Breast epithelium (tissue), 4 donors: ENCODE measurements at regions of chr9 and their contacts with region 1.

Region 1: GRCh38 chr9:91422758-91423711 is 597 bp downstream of the NFIL3 start:
- DNase-seq: peak in 1 of 2 donors; percentile 77
- H3K4me3 ChIP-seq: peak overlapping the region; percentile 59 to 88 (median 81)
- H3K27ac ChIP-seq: peak overlapping the region; percentile 93 to 100
- H3K4me1 ChIP-seq: peaks cover 0 to 12% of the 10 kb centered on the region in 2 donors
- H3K27me3 ChIP-seq: no peaks in the 10 kb centered on the region
- CTCF ChIP-seq: peak in 2 of 3 donors; percentile 25 to 35
- POLR2A ChIP-seq: peak; percentile 61

Region 2: DNA sequence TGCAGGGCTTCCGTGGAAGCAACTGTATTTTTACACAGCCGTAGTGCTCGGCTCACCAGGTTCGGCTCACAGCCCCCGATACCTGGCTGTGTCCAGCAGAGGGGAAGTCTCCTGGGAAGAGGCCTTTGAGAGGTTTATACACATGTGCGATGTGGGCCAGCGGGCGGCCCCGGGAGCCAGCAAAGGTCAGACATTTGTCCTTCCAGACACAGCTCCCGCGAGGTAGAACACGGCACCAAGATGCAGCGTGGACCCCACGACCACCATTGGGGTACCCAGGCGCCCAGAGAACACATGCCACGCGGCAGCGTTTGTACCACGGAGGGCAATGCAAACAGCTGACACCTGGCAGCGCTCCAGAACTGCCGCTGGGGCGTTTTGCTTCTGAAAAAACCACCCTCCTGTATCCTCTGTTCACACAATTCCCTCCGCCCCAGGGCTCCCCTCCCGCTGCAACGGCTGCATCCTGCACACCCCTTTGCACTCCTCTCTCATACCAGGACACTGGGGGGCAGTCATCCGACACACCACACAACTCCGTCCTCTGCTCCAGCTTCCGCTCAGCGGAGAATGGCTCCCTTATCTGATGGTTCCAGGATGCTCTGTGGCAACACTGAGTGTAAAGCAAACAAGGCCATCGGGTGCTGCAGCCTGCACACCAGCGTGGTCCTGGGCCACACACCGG is 386.1 kb before region 1 on chr9:
- intact Hi-C with region 1: loop called (anchors 10 kb)
- DNase-seq: peak; percentile 58 to 71
- H3K4me3 ChIP-seq: peak overlapping the region in 1 of 3 donors; percentile 35
- H3K27ac ChIP-seq: peak overlapping the region in 1 of 2 donors; percentile 68
- H3K4me1 ChIP-seq: peaks cover 0 to 5% of the 10 kb centered on the region in 2 donors
- H3K27me3 ChIP-seq: no peaks in the 10 kb centered on the region
- CTCF ChIP-seq: peak; percentile 31 to 58 (median 50)
- POLR2A ChIP-seq: no peak

Region 3: DNA sequence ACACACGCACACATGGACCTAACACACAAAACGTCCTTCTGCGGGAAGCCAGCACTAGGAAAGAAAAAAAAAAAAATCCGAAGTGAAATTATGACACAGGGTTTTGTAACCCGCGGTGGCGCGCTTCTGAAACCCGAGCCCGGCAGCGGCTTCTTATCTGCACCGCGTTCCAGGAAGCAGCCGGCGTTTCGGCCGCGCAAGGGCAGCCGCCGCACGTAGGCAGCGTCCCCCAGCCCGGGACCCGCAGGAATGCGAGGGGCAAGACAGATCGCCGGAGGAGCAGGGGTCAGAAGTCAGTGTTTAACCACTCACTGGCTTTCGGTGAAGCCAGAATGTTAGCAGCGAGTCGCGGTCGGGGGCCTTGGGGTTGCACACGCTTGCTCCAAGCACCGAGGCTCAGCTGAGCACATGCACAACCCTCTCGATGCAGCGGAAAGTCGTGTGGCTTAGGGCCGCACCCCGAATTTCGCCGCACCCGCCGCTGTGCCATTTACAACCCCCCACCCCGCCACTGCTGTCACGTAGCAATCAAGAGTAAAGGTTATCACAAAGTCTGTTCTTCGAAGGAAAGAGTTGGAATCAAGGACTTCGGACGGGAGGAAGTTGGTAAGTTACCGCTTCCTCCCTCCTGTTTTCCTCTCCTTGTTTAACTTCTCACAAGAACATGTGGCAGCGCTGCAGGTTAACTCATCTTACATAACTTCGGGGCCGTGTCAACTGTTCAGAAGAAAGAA is 229.2 kb before region 1 on chr9:
- intact Hi-C with region 1: loop called (anchors 5 kb)
- DNase-seq: peak in 1 of 2 donors; percentile 76
- H3K4me3 ChIP-seq: peak overlapping the region; percentile 47 to 62 (median 51)
- H3K27ac ChIP-seq: peak overlapping the region; percentile 94 to 96
- H3K4me1 ChIP-seq: peaks cover 0 to 29% of the 10 kb centered on the region in 2 donors
- H3K27me3 ChIP-seq: no peaks in the 10 kb centered on the region
- CTCF ChIP-seq: no peak
- POLR2A ChIP-seq: peak; percentile 38

Region 4: GRCh38 chr9:91301161-91301560 is 121.9 kb before region 1 on chr9:
- intact Hi-C with region 1: loop called (anchors 10 kb)
- DNase-seq: no peak
- H3K4me3 ChIP-seq: no peak overlapping the region
- H3K27ac ChIP-seq: peak overlapping the region; percentile 49 to 85
- H3K4me1 ChIP-seq: peaks cover 2 to 5% of the 10 kb centered on the region in 2 donors
- H3K27me3 ChIP-seq: no peaks in the 10 kb centered on the region
- CTCF ChIP-seq: no peak
- POLR2A ChIP-seq: no peak